Sciatic nerve (tissue), 2 donors: ENCODE measurements at regions of chr7 and their contacts with region 1.

Region 1: DNA sequence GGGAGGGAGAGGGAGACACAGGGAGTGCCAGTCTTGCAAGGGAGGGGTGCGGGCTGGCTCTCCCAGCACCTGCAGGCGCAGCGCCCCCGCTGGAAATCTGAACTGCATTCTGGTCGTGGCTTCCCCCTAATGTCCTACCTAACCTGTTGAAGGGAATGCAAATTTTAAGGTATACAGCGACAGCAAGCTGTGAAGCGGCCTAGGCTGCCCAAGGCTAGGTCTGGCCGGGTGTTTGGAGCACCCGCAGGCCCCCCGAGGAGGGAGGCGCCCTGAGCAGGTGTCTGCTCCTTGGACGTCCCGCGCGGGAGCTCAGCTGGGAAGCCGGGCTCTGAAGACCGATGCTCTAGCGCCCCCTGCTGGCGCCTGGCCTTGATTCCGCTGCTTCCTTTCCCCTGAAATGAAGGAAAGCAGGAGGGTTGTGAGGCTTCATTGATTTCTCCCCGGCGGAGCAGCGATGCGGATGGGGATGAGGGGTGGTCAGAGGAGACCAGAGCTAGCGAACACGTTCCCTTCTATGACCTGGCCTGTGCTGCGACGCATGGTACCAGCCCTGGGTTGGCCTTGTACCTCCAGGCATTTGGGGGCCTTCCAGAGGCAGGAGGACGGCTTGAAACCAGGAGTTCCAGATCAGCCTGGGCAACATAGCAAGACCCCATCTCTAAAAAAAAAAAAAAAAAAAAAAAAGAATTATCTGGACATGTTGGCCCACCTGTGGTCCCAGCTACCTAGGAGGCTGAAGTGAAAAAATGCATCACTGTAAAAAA is 601.3 kb downstream of the GALNT17 start:
- DNase-seq: peak; percentile 93
- ATAC-seq: peak; percentile 80

Region 2: GRCh38 chr7:70693686-70694360 is 1039.5 kb before region 1 on chr7:
- intact Hi-C with region 1: no loop called
- DNase-seq: peak; percentile 86
- ATAC-seq: peak; percentile 68

Region 3: DNA sequence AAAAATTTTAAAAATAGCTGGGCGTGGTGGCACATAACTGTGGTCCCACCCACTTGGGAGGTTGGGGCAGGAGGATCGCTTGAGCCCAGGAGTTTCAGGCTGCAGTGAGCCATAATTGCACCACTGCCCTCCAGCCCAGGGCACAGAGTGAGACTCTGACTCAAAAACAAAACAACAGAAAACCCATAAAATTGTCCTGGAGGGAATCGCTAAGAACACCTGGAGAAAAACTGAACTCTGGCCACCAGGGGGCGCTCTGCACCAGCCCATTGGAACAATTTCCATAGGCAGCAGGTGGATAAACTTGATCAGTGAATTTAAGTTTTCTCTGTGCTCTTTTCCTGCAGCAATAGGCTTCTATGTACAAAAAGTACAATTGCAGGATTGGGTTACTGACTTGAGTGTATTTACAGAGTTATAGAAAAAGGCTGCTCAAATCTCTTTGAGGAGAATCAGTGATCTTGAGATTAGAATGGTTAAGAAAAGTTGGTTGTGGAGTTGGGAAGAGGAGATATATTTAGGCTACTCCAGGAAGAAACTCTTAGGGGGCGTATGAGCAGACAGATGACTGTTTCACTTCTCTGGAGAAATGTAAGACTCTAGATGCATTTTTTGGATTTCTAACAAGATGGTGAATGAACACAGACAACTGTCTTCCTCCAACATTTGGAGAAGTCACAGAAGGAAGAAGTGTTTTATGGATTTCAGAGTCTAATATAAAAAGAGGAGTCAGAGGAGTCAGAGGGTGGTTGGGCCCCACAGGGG is 876.2 kb before region 1 on chr7:
- intact Hi-C with region 1: loop called (anchors 5 kb)
- DNase-seq: peak; percentile 89
- ATAC-seq: peak; percentile 41

Region 4: GRCh38 chr7:71364551-71364950 is 368.7 kb before region 1 on chr7:
- intact Hi-C with region 1: loop called (anchors 5 kb)
- DNase-seq: no peak
- ATAC-seq: no peak